ENCODE measurements at regions of chr14 and their contacts with region 1.

Region 1: GRCh38 chr14:93115069-93115820 is 480 bp downstream of the ITPK1 start:
- DNase-seq: peak; percentile 80 to 89 (median 87)
- H3K4me3 ChIP-seq: peak overlapping the region in 1 of 2 donors; percentile 72
- H3K4me3 Mint-ChIP-seq: peak overlapping the region; percentile 51 to 92 (median 88)
- H3K27ac ChIP-seq: peak overlapping the region; percentile 64
- H3K27ac Mint-ChIP-seq: peak overlapping the region in 4 of 7 donors; percentile 66 to 90 (median 78)
- H3K4me1 ChIP-seq: peaks cover 38% of the 10 kb centered on the region
- H3K4me1 Mint-ChIP-seq: peaks cover 19 to 29% (median 21%) of the 10 kb centered on the region in 4 donors
- H3K27me3 ChIP-seq: no peaks in the 10 kb centered on the region
- H3K27me3 Mint-ChIP-seq: no peaks in the 10 kb centered on the region

Region 2: GRCh38 chr14:92247341-92247740 is 867.9 kb before region 1 on chr14:
- CTCF ChIA-PET with region 1: no interaction called
- POLR2A ChIA-PET with region 1: no interaction called
- intact Hi-C with region 1: no loop called
- DNase-seq: no peak
- H3K4me3 ChIP-seq: no peak overlapping the region
- H3K4me3 Mint-ChIP-seq: no peak overlapping the region
- H3K27ac ChIP-seq: no peak overlapping the region
- H3K27ac Mint-ChIP-seq: no peak overlapping the region
- H3K4me1 ChIP-seq: no peaks in the 10 kb centered on the region
- H3K4me1 Mint-ChIP-seq: no peaks in the 10 kb centered on the region
- H3K27me3 ChIP-seq: no peaks in the 10 kb centered on the region
- H3K27me3 Mint-ChIP-seq: peaks cover 7 to 20% of the 10 kb centered on the region in 2 donors

Region 3: GRCh38 chr14:92951912-92952471 is 163.3 kb before region 1 on chr14:
- CTCF ChIA-PET with region 1: interaction called, 6 read pairs
- POLR2A ChIA-PET with region 1: interaction called, 3 read pairs
- intact Hi-C with region 1: loop called (anchors 1 kb)
- DNase-seq: peak; percentile 66 to 76 (median 70)
- H3K4me3 ChIP-seq: no peak overlapping the region
- H3K4me3 Mint-ChIP-seq: no peak overlapping the region
- H3K27ac ChIP-seq: no peak overlapping the region
- H3K27ac Mint-ChIP-seq: peak overlapping the region in 4 of 7 donors; percentile 17 to 25 (median 23)
- H3K4me1 ChIP-seq: no peaks in the 10 kb centered on the region
- H3K4me1 Mint-ChIP-seq: peaks cover 3 to 9% (median 5%) of the 10 kb centered on the region in 4 donors
- H3K27me3 ChIP-seq: no peaks in the 10 kb centered on the region
- H3K27me3 Mint-ChIP-seq: no peaks in the 10 kb centered on the region

Region 4: GRCh38 chr14:93126111-93126510 is 10.9 kb after region 1 on chr14:
- CTCF ChIA-PET with region 1: interaction called, 105 read pairs
- POLR2A ChIA-PET with region 1: interaction called, 10 read pairs
- intact Hi-C with region 1: no loop called
- DNase-seq: no peak
- H3K4me3 ChIP-seq: no peak overlapping the region
- H3K4me3 Mint-ChIP-seq: no peak overlapping the region
- H3K27ac ChIP-seq: no peak overlapping the region
- H3K27ac Mint-ChIP-seq: no peak overlapping the region
- H3K4me1 ChIP-seq: no peaks in the 10 kb centered on the region
- H3K4me1 Mint-ChIP-seq: no peaks in the 10 kb centered on the region
- H3K27me3 ChIP-seq: no peaks in the 10 kb centered on the region
- H3K27me3 Mint-ChIP-seq: no peaks in the 10 kb centered on the region

Region 5: DNA sequence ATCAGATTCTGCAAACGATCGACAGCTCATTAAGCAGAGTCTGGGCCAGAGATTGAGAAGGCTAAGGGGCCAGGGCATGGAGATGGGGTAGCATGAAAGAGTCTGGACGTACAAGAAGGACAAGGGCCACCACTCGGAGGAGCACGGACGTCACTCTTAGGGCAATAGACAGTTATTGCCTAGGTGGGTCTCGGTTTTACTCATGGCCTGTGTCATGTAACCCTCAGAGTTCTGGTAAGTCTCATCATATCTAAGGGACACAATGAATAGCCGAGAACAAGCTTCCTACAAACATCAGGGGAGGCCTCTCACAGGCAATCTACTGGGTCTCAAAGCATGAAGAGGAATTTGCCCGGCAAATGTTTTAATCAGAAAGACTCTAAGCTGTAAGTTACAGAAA is 30.9 kb after region 1 on chr14:
- CTCF ChIA-PET with region 1: interaction called, 93 read pairs
- POLR2A ChIA-PET with region 1: interaction called, 3 read pairs
- intact Hi-C with region 1: no loop called
- DNase-seq: no peak
- H3K4me3 ChIP-seq: no peak overlapping the region
- H3K4me3 Mint-ChIP-seq: no peak overlapping the region
- H3K27ac ChIP-seq: no peak overlapping the region
- H3K27ac Mint-ChIP-seq: no peak overlapping the region
- H3K4me1 ChIP-seq: no peaks in the 10 kb centered on the region
- H3K4me1 Mint-ChIP-seq: peaks cover 0 to 9% (median 4%) of the 10 kb centered on the region in 4 donors
- H3K27me3 ChIP-seq: no peaks in the 10 kb centered on the region
- H3K27me3 Mint-ChIP-seq: peaks cover 0 to 3% of the 10 kb centered on the region in 2 donors

Region 6: DNA sequence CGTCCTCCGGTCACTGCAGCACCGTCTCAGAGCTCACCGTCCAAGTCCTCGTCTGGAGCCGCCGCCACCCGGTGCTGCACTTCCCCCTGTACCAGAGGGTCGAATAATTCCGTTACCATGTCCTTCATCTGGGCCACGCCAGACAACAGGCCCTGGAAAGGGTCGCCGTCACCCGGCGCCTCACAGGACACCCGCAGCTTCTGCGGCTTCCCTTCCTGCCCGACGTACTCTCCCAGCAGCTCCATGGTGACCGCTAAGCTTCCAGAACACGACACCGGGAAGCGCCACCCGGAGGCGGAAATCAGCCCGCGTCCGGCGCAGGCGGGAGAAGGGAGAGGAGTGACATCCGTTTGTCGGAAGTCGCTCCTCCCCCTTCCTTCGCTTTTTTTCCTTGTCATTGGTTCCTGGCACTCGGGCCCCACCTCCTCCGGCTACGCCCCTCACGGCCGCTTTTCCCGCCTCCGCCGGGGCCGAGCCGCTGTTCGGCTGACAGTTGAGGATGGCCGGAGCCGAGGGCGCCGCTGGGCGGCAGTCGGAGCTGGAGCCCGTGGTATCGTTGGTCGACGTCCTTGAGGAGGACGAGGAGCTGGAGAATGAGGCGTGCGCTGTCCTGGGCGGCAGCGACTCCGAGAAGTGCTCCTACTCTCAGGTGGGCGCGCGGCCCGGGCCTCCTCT is 91.7 kb after region 1 on chr14 and contains the starts of genes GON7 and UBR7:
- CTCF ChIA-PET with region 1: interaction called, 25 read pairs
- POLR2A ChIA-PET with region 1: interaction called, 4 read pairs
- intact Hi-C with region 1: no loop called
- DNase-seq: peak; percentile 81 to 91 (median 85)
- H3K4me3 ChIP-seq: peak within 1 kb of the TSS; percentile 73 to 99
- H3K4me3 Mint-ChIP-seq: peak within 1 kb of the TSS; percentile 89 to 99 (median 97)
- H3K27ac ChIP-seq: peak within 1 kb of the TSS; percentile 77
- H3K27ac Mint-ChIP-seq: peak within 1 kb of the TSS; percentile 90 to 97 (median 96)
- H3K4me1 ChIP-seq: peaks cover 42% of the 10 kb centered on the region
- H3K4me1 Mint-ChIP-seq: peaks cover 27 to 50% (median 38%) of the 10 kb centered on the region in 4 donors
- H3K27me3 ChIP-seq: no peaks in the 10 kb centered on the region
- H3K27me3 Mint-ChIP-seq: no peaks in the 10 kb centered on the region
- total RNA-seq, gene GON7: 11.6 to 12.7 TPM
- total RNA-seq, gene UBR7: 17.5 to 17.8 TPM

Region 7: GRCh38 chr14:93892923-93893558 is 777.8 kb after region 1 on chr14:
- CTCF ChIA-PET with region 1: no interaction called
- POLR2A ChIA-PET with region 1: no interaction called
- intact Hi-C with region 1: loop called (anchors 5 kb)
- DNase-seq: peak in 4 of 5 donors; percentile 44 to 58 (median 48)
- H3K4me3 ChIP-seq: no peak overlapping the region
- H3K4me3 Mint-ChIP-seq: no peak overlapping the region
- H3K27ac ChIP-seq: no peak overlapping the region
- H3K27ac Mint-ChIP-seq: no peak overlapping the region
- H3K4me1 ChIP-seq: no peaks in the 10 kb centered on the region
- H3K4me1 Mint-ChIP-seq: no peaks in the 10 kb centered on the region
- H3K27me3 ChIP-seq: no peaks in the 10 kb centered on the region
- H3K27me3 Mint-ChIP-seq: peaks cover 14 to 18% of the 10 kb centered on the region in 2 donors

Measured in CD4-positive, alpha-beta memory T cell (primary cell).